Ascending aorta (tissue), 2 donors: ENCODE measurements at regions of chr22 and their contacts with region 1.

Region 1: GRCh38 chr22:40922484-40923303 is 28.5 kb upstream of the RBX1 start:
- DNase-seq: no peak
- H3K4me3 ChIP-seq: no peak overlapping the region
- H3K27ac ChIP-seq: no peak overlapping the region
- H3K4me1 ChIP-seq: peaks cover 0 to 5% of the 10 kb centered on the region in 2 donors
- H3K27me3 ChIP-seq: no peaks in the 10 kb centered on the region
- CTCF ChIP-seq: peak; percentile 62 to 78 (median 74)

Region 2: GRCh38 chr22:41526837-41527799 is 604.4 kb after region 1 on chr22:
- intact Hi-C with region 1: loop called (anchors 10 kb)
- DNase-seq: peak in 1 of 2 donors; percentile 75
- H3K4me3 ChIP-seq: no peak overlapping the region
- H3K27ac ChIP-seq: peak overlapping the region; percentile 94 to 96
- H3K4me1 ChIP-seq: peaks cover 24 to 31% of the 10 kb centered on the region in 2 donors
- H3K27me3 ChIP-seq: no peaks in the 10 kb centered on the region
- CTCF ChIP-seq: peak; percentile 77 to 88 (median 81)